Head of caudate nucleus (tissue), 42 donors: ENCODE measurements at regions of chr16 and their contacts with region 1.

Region 1: DNA sequence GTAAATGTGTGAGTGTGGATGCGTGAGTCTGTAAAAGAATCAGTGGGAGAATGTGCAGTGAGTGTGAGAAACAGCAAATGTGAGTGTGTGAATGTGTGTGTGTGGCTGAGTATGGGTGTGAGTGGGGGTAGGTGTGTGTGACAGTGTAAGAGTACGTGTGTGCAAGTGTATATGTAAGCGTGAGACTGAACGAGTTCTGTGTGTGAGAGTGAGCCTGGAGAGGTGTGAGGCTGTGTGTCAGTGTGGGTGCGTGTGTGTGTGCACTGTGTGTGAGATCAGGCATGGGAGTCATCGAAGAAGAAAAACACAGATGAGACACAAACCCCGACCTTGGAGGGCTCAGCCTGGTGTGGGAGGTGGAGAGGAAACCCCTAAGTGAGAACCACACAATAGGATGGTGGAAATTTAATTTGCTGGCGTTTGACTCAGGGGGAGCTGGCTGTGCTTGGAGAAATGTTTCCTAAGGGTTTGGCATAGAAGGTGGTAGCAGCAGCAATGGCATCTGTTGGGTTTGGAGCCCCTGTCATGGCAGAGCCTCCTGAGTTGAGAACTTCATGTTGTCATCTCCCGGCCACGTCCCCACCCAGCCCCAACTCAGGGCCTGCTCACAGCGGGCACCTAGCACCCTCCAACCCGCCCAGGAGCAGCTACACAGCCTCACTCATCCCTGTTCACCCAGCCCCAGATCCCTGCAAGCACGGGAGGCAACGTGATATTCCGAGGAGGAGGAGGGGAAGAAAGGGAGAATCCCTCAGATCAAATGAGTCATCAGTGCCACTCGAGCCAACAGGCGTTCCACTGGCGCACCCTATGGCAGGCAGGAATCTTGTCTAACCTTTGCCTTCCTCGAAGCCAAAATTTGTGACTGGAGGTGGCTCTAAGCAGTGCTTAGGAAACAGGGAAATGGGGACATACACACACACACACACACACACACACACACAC is 14.3 kb upstream of the NUBP1 start:
- DNase-seq: peak; percentile 31 to 90 (median 72)

Region 2: GRCh38 chr16:10521681-10522274 is 207.6 kb before region 1 on chr16:
- intact Hi-C with region 1: loop called (anchors 5 kb)
- DNase-seq: peak in 38 of 42 donors; percentile 10 to 85 (median 51)

Region 3: DNA sequence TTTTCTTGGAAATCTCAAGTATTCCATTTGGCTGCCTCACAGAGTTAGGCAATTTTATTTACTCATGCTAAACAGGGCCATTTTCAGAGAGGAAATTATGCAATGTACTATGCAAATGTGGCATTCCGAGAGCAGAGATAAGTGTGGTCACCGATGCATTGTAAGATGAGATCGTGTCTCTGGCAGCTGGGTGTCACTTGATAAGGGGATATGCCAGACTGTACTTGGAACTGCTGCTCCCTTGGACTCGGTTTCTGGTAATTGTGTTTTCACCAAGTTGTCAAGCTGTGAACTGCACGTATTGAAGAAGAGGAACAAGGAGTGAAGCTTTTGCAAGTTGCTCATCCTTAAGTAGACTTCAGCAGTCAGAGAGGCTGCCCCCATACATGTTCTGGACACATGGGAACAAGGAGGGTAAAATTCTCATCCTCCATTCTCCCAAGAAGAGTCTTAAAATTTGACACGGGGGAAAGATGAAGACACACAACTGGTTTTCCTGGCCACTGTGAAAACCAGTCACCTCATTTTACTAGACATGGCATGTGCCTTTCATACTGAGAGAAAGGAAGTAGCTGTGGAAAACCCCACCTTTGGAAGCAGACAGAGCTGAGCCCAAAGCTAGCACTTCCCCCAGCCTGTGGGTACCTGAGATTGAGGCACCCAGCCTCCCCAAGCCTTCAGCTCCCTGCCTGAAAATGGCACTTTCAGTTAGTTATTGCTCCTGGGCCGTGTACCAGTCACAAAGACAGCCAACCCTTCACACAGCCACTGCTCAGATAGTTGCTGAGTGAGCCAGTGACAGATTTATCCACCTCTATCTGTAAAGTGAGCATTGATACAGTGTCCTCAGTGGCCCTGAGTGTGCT is 375.9 kb after region 1 on chr16:
- intact Hi-C with region 1: no loop called
- DNase-seq: no peak